ENCODE measurements at regions of chr3 and their contacts with region 1.

Region 1: DNA sequence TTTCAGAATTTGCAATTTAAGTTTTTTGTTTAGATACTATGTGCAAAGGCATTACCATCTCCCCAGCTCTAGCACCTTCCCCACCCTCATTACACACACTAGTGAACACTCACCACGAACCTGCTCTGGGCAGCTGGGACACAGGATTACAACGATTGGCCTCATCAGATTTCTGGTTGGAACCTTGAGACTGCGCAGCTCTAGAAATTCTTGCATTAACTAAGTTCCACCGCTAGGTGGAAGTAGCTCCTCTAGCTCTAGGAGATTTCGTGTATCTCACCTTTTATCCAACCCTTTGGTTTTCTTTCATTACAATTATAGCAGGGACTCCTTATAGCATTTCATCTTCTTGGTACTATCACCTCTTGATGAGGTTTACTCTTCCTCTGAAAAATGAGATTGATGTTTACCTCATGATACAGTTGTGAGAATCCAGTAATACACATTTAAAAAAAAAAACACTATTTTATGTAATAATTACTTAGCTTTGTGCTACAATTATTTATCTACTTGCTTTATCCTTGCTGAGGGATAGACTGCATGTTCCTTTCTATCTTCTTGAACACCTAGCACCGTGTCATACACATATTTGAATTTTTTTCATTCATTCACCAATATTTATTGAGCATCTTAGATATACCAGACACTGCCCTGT is 28.7 kb upstream of the PLOD2 start:
- DNase-seq: no peak
- H3K4me3 ChIP-seq: no peak overlapping the region
- CTCF ChIP-seq: peak; percentile 57

Region 2: DNA sequence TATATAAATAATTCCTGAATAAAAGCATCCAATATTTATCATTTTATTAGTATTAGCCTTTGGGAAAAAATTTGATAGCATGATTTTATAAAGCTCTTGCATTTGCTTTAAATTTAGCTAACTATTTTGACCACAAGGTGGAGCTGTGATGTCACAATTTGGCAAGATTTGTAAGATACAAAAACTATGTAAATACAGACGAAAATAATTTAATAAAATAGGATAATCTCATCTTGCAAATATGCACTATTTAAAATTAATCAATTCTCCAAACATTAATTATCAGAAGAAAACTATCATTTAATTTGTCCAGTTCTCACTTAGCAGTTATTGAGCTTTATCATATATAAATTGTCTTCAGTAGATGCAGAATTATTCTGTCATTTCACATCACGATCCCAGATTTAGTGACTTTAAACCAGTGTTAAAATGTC is 124.1 kb before region 1 on chr3:
- CTCF ChIA-PET with region 1: interaction called, 203 read pairs
- POLR2A ChIA-PET with region 1: interaction called, 3 read pairs
- DNase-seq: no peak
- H3K4me3 ChIP-seq: no peak overlapping the region
- CTCF ChIP-seq: peak; percentile 36

Region 3: GRCh38 chr3:146160964-146161662 is 28.5 kb before region 1 on chr3 and contains the start of gene PLOD2:
- CTCF ChIA-PET with region 1: interaction called, 43 read pairs
- POLR2A ChIA-PET with region 1: interaction called, 4 read pairs
- DNase-seq: peak; percentile 83
- H3K4me3 ChIP-seq: peak within 1 kb of the TSS; percentile 93
- CTCF ChIP-seq: no peak

Region 4: DNA sequence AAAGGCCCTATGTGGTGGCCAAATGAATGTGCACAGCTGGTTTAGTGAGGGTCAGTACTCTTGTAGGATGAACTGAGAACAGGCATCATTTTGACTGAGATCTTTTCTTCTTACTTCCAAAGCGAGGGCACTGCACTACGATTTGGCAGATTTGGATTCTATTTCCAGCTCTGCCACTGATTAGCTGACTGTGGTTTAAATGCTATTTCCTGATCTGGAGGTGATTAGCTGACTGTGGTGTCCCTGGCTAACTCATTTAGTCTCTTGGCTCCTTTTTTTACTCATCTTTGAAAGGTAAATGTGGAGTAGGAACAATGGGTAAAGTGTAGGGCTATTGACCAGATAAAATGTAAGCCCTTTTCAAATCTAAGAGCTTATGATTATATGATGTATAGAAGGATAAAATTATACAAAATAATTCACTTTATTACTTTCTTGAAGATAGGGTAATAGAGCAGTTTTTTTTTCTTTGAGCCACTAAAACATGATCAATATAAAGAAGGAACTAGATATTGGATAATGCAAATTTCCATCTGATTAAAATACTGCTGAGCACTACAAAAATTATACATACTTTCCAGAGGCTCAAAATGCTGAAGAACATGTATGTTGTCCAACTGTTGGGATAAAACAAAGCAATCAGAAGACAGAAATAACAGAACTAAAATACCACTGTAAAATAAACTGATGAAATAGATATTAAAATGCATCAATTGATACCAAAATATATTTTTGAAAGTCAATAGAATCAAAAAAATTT is 11.0 kb after region 1 on chr3:
- CTCF ChIA-PET with region 1: interaction called, 29 read pairs
- POLR2A ChIA-PET with region 1: no interaction called
- DNase-seq: no peak
- H3K4me3 ChIP-seq: no peak overlapping the region
- CTCF ChIP-seq: no peak

Region 5: GRCh38 chr3:146326670-146327543 is 137.3 kb after region 1 on chr3:
- CTCF ChIA-PET with region 1: interaction called, 208 read pairs
- POLR2A ChIA-PET with region 1: interaction called, 3 read pairs
- DNase-seq: peak; percentile 26
- H3K4me3 ChIP-seq: no peak overlapping the region
- CTCF ChIP-seq: peak; percentile 40

Region 6: DNA sequence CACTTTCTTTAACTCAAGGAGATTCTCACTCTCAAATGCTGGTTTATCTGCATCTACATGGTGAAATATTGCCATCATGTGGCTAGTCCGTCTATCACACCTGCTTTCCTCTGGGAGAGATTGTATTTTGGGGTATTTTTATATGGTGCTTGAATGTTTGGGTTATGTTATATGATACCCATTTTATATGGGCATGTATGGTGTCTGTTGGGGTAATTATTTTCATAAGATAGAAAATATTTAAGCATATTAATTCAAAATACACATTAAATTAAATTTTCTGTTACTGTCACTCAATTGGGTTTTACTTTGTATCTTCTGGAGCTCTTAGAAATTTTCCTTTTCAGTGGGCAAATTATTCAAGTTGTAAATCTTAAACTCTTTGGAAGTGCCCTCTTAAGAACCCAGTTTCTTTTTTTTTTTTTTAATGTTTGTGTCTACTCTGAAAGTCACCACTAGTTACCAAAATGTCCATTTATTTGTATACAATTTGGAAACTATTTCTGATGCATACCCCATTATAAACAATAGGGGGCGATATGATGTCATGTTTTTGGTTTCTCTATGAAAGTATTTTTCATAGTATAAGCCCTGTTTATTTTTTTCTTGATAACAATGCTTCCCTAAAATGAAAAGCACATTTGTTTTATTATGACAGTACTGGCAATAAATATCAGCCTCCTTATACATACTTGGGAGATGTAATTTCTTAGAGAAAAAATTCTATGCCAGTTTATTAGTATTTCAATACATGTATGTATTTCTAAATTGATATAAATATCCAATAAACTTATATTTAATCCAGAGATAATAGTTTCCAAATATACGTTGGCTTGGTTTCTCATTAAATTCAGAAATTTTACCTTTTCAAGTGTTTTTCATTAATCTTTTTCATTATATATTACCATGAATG is 451.6 kb after region 1 on chr3:
- CTCF ChIA-PET with region 1: interaction called, 11 read pairs
- POLR2A ChIA-PET with region 1: no interaction called
- DNase-seq: no peak
- H3K4me3 ChIP-seq: no peak overlapping the region
- CTCF ChIP-seq: peak; percentile 36

Region 7: DNA sequence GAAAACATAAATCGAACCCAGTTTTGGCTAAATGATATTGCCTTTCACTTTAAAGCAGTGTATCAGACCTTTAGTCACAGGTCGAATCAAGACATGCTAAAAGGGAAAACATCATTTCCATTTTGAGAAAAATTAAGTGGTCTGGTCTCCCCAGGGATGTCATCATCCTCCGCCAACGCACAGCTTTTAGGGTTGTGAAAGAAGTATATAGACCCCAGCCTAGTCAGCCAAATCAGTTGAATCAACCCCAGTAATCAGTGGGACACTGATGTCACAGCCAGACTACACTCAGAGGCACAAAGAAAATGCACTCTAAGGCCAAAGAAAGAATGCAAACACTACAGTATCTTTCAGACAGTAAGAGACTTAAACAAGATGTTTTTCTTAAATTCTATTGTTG is 1029.3 kb after region 1 on chr3:
- CTCF ChIA-PET with region 1: no interaction called
- POLR2A ChIA-PET with region 1: no interaction called
- DNase-seq: no peak
- H3K4me3 ChIP-seq: no peak overlapping the region
- CTCF ChIP-seq: no peak

Measured in AG04449 (cell line).